Heart left ventricle (tissue), 16 donors: ENCODE measurements at regions of chr5 and their contacts with region 1.

Region 1: GRCh38 chr5:147586832-147587231 is 77.0 kb upstream of the DPYSL3 start:
- DNase-seq: no peak
- ATAC-seq: no peak
- H3K4me3 ChIP-seq: no peak overlapping the region
- H3K27ac ChIP-seq: no peak overlapping the region
- H3K4me1 ChIP-seq: no peaks in the 10 kb centered on the region
- H3K27me3 ChIP-seq: peaks cover 0 to 6% (median 0%) of the 10 kb centered on the region in 9 donors
- CTCF ChIP-seq: no peak
- POLR2A ChIP-seq: no peak

Region 2: GRCh38 chr5:147216552-147217154 is 370.2 kb before region 1 on chr5:
- intact Hi-C with region 1: loop called in 1 of 10 experiments (anchors 5 kb)
- DNase-seq: no peak
- ATAC-seq: no peak
- H3K4me3 ChIP-seq: no peak overlapping the region
- H3K27ac ChIP-seq: no peak overlapping the region
- H3K4me1 ChIP-seq: no peaks in the 10 kb centered on the region
- H3K27me3 ChIP-seq: peaks cover 0 to 34% (median 0%) of the 10 kb centered on the region in 9 donors
- CTCF ChIP-seq: no peak
- POLR2A ChIP-seq: no peak

Region 3: GRCh38 chr5:147327421-147327820 is 259.4 kb before region 1 on chr5:
- intact Hi-C with region 1: no loop called
- DNase-seq: no peak
- ATAC-seq: no peak
- H3K4me3 ChIP-seq: no peak overlapping the region
- H3K27ac ChIP-seq: no peak overlapping the region
- H3K4me1 ChIP-seq: no peaks in the 10 kb centered on the region
- H3K27me3 ChIP-seq: no peaks in the 10 kb centered on the region
- CTCF ChIP-seq: no peak
- POLR2A ChIP-seq: no peak

Region 4: DNA sequence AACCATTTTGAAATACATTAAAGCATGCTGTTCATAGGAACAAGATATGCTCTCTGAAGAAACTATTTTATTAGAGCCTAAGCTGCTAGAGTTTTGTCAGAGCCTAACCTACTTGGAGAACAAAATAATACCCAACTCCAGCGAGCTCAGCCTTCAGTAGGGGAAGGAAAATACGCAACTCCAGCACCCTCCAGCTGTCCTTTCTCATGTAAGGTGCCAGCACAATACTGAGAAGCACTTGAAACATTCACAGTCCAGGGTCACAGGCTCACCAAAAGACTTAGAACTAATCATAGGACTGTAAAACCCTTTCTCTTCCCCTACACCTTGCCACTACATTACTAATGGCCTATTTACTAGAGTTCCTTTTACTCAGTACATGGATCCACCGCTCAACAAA is 95.8 kb before region 1 on chr5:
- intact Hi-C with region 1: no loop called
- DNase-seq: no peak
- ATAC-seq: peak in 1 of 4 donors; percentile 46
- H3K4me3 ChIP-seq: no peak overlapping the region
- H3K27ac ChIP-seq: peak overlapping the region in 3 of 12 donors; percentile 5 to 18 (median 11)
- H3K4me1 ChIP-seq: peaks cover 0 to 32% (median 8%) of the 10 kb centered on the region in 12 donors
- H3K27me3 ChIP-seq: no peaks in the 10 kb centered on the region
- CTCF ChIP-seq: no peak
- POLR2A ChIP-seq: no peak